ENCODE measurements at regions of chr14 and their contacts with region 1.

Region 1: DNA sequence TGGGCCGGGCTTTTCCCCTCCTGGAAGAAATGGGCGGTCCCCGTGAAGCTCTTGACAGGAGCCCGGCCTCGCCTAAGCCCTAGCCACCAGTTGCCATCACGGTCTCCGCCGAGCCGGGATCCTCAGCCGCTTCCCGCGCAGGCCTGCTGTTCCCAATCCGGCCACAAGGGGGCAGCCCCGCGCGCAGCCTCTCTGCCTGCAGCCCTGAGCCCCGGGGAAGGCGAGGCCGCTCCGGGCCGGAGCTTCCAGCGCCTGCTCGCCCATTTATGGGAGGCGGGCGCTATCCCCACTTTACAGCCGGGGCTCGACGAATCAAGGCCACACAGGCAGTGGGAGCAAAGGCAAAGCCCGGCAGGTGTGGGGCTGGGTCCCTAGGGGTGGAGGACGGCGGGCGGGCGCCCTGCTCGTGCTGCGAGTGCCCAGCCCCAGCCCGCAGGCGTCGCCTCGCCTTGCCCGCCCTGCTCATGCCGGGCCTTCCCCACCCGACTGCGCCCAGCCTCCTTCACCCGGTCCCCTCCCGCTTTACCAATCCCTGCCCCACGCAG is 61.5 kb downstream of the LGMN start:
- DNase-seq: peak; percentile 74 to 91
- ATAC-seq: peak; percentile 81 to 94
- H3K4me3 ChIP-seq: no peak overlapping the region
- H3K27ac ChIP-seq: peak overlapping the region in 1 of 2 experiments; percentile 69; a peak in 3 of 6 replicates
- H3K4me1 ChIP-seq: 0 out of 3 replicates have a peak, but pooled peaks cover 4% of the 10 kb centered on the region
- CTCF ChIP-seq: peak; percentile 77
- EP300 ChIP-seq: no peak
- POLR2A ChIP-seq: no peak
- RAD21 ChIP-seq: peak; percentile 68 to 73

Region 2: DNA sequence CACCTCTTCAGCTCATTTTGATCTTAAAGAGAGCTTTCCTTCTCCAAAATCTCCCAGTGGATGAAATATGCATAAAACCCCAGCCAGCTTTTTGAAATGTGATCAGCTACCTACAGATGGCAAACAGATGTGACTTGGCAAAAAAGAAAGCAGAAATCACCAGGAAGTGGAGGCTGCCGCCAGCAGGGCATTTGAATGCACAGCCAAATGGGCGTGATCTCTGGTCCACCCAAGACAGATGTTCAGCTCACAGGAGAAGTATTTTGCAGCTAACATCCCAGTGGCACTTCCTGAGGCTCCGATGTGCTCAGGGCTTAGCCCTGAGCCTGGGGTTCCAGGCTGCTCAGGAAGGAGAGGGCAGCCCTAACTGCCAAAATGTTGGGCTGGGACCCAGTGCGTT is 16.8 kb before region 1 on chr14:
- CTCF ChIA-PET with region 1: interaction called, 21 read pairs
- POLR2A ChIA-PET with region 1: no interaction called
- DNase-seq: peak in 1 of 2 experiments; percentile 33
- ATAC-seq: 0 out of 6 replicates have a peak, but pooled peaks of 1 of the 2 experiments have one; percentile 12
- H3K4me3 ChIP-seq: no peak overlapping the region
- H3K27ac ChIP-seq: peak overlapping the region in 1 of 2 experiments; percentile 36; a peak in 2 of 6 replicates
- H3K4me1 ChIP-seq: 0 out of 3 replicates have a peak, but pooled peaks cover 6% of the 10 kb centered on the region
- CTCF ChIP-seq: no peak
- EP300 ChIP-seq: no peak
- POLR2A ChIP-seq: no peak
- RAD21 ChIP-seq: no peak

Region 3: DNA sequence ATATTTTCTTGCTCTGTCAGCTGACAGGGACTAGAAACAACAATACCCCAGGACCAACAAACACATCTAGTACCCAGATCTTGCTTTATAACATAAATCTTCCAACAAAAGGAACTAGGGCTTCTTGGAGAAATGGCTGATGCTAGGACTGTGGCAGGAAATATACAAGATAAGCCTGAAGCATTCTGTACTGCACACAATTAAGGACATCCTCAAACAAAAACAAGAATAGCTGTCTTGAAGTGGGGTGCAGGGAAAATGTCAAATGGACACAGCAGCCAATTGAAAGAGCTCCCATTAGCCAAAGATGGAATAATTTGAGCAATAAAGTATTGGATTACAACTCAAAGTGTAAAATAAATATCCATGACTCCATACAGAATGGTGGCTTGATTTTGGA is 11.4 kb after region 1 on chr14:
- CTCF ChIA-PET with region 1: interaction called, 21 read pairs
- POLR2A ChIA-PET with region 1: no interaction called
- DNase-seq: no peak
- ATAC-seq: no peak
- H3K4me3 ChIP-seq: no peak overlapping the region
- H3K27ac ChIP-seq: no peak overlapping the region
- H3K4me1 ChIP-seq: peaks cover 13% of the 10 kb centered on the region
- CTCF ChIP-seq: no peak
- EP300 ChIP-seq: no peak
- POLR2A ChIP-seq: no peak
- RAD21 ChIP-seq: no peak

Region 4: GRCh38 chr14:92717571-92718042 is 30.6 kb after region 1 on chr14:
- CTCF ChIA-PET with region 1: interaction called, 14 read pairs
- POLR2A ChIA-PET with region 1: no interaction called
- DNase-seq: no peak
- ATAC-seq: no peak
- H3K4me3 ChIP-seq: no peak overlapping the region
- H3K27ac ChIP-seq: no peak overlapping the region
- H3K4me1 ChIP-seq: peaks cover 15% of the 10 kb centered on the region
- CTCF ChIP-seq: no peak
- EP300 ChIP-seq: no peak
- POLR2A ChIP-seq: no peak
- RAD21 ChIP-seq: no peak

Region 5: GRCh38 chr14:92768795-92769194 is 81.8 kb after region 1 on chr14:
- CTCF ChIA-PET with region 1: interaction called, 13 read pairs
- POLR2A ChIA-PET with region 1: no interaction called
- DNase-seq: no peak
- ATAC-seq: no peak
- H3K4me3 ChIP-seq: no peak overlapping the region
- H3K27ac ChIP-seq: no peak overlapping the region
- H3K4me1 ChIP-seq: no peaks in the 10 kb centered on the region
- CTCF ChIP-seq: no peak
- EP300 ChIP-seq: no peak
- POLR2A ChIP-seq: no peak
- RAD21 ChIP-seq: no peak

Region 6: GRCh38 chr14:92937051-92937937 is 250.3 kb after region 1 on chr14:
- CTCF ChIA-PET with region 1: no interaction called
- POLR2A ChIA-PET with region 1: no interaction called
- DNase-seq: peak in 1 of 2 experiments; percentile 41
- ATAC-seq: peak; percentile 40; a peak in 3 of 6 replicates
- H3K4me3 ChIP-seq: no peak overlapping the region
- H3K27ac ChIP-seq: no peak overlapping the region
- H3K4me1 ChIP-seq: peaks cover 11% of the 10 kb centered on the region; the same call in 2 of the 3 replicates
- CTCF ChIP-seq: no peak
- EP300 ChIP-seq: no peak
- POLR2A ChIP-seq: no peak
- RAD21 ChIP-seq: no peak